PC-9 (cell line): ENCODE measurements at regions of chr7 and their contacts with region 1.

Region 1: GRCh38 chr7:28037220-28038010 is 143.2 kb downstream of the JAZF1 start:
- DNase-seq: peak; percentile 43 to 100
- H3K4me3 ChIP-seq: peak overlapping the region; percentile 22; the same call in 1 of the 2 replicates
- H3K27ac ChIP-seq: peak overlapping the region; percentile 85
- H3K4me1 ChIP-seq: peaks cover 73% of the 10 kb centered on the region
- H3K27me3 ChIP-seq: no peaks in the 10 kb centered on the region
- CTCF ChIP-seq: no peak

Region 2: DNA sequence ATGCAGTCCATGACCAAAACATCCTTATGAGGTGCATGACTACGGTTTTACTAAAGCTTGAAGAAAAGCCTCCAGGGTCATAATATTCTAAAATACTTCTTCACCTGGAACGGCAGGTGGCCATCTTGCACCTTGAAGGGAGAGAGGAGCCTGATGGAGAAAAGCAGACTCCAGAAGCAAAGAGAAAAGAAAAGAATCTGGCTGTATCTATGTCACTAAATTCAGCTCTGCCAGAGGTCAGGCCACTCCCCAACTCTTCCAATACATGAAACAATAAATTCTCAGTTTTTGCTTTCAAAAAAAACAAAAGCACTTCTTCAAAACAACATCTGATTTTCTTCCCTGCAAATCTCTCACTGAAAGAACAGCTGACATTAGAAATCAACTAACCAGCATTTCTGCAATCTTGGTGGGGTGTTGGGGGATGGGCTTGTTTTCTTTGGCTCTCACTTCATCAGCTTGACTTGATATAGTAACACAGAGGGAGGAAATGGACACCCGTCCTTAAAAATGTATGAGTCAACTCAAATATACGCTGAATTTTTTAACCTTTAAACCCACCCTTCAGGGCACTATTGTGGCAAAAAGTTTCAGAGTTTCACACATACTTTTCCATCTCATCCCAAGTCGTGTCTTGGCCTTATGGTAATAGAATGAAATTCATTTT is 396.4 kb before region 1 on chr7:
- CTCF ChIA-PET with region 1: no interaction called
- POLR2A ChIA-PET with region 1: interaction called, 6 read pairs
- intact Hi-C with region 1: loop called (anchors 2 kb)
- DNase-seq: peak; percentile 87 to 96
- H3K4me3 ChIP-seq: peak overlapping the region; percentile 8; the same call in 1 of the 2 replicates
- H3K27ac ChIP-seq: peak overlapping the region; percentile 90
- H3K4me1 ChIP-seq: peaks cover 37% of the 10 kb centered on the region
- H3K27me3 ChIP-seq: no peaks in the 10 kb centered on the region
- CTCF ChIP-seq: peak; percentile 40; the same call in 1 of the 2 replicates

Region 3: GRCh38 chr7:27677912-27678612 is 359.4 kb before region 1 on chr7:
- CTCF ChIA-PET with region 1: no interaction called
- POLR2A ChIA-PET with region 1: interaction called, 14 read pairs
- intact Hi-C with region 1: no loop called
- DNase-seq: peak; percentile 51 to 98
- H3K4me3 ChIP-seq: peak overlapping the region; percentile 11; the same call in 1 of the 2 replicates
- H3K27ac ChIP-seq: peak overlapping the region; percentile 98
- H3K4me1 ChIP-seq: peaks cover 33% of the 10 kb centered on the region
- H3K27me3 ChIP-seq: no peaks in the 10 kb centered on the region
- CTCF ChIP-seq: no peak

Region 4: GRCh38 chr7:28062197-28062991 is 25.0 kb after region 1 on chr7:
- CTCF ChIA-PET with region 1: interaction called, 14 read pairs
- POLR2A ChIA-PET with region 1: interaction called, 6 read pairs
- intact Hi-C with region 1: no loop called
- DNase-seq: peak; percentile 57 to 87
- H3K4me3 ChIP-seq: no peak overlapping the region
- H3K27ac ChIP-seq: peak overlapping the region; percentile 6
- H3K4me1 ChIP-seq: peaks cover 34% of the 10 kb centered on the region
- H3K27me3 ChIP-seq: no peaks in the 10 kb centered on the region
- CTCF ChIP-seq: peak; percentile 75

Region 5: DNA sequence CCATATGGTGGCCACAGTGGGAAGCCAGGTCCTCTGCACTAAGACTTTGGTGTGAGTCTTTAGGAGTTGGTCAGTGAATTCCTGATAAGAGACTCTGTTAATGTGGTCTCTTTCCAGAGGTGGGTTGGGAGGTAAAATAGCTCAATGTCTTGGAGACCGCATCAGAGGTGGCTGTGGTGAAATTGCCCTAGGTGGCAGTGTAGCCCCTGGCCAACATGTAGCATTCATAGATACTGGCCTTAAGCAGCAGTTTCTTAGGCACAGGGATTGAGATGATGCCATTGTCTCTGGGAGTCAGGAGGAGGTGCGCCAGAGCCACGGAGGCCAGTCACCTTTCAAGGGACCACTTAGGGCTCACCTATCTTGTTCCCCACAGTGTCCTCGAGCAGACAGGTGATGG is 577.7 kb after region 1 on chr7:
- CTCF ChIA-PET with region 1: no interaction called
- POLR2A ChIA-PET with region 1: no interaction called
- intact Hi-C with region 1: loop called (anchors 10 kb)
- DNase-seq: no peak
- H3K4me3 ChIP-seq: no peak overlapping the region
- H3K27ac ChIP-seq: no peak overlapping the region
- H3K4me1 ChIP-seq: peaks cover 43% of the 10 kb centered on the region
- H3K27me3 ChIP-seq: no peaks in the 10 kb centered on the region
- CTCF ChIP-seq: no peak